ENCODE measurements at regions of chr22 and their contacts with region 1.

Region 1: GRCh38 chr22:17171313-17172171 is 12.5 kb upstream of the HDHD5 start:
- H3K4me3 ChIP-seq: peak overlapping the region; percentile 78
- H3K27ac ChIP-seq: peak overlapping the region; percentile 83
- H3K4me1 ChIP-seq: 0 out of 2 replicates have a peak, but pooled peaks cover 4% of the 10 kb centered on the region
- CTCF ChIP-seq: peak; percentile 90

Region 2: GRCh38 chr22:16970446-16970845 is 201.1 kb before region 1 on chr22:
- CTCF ChIA-PET with region 1: no interaction called
- POLR2A ChIA-PET with region 1: no interaction called
- H3K4me3 ChIP-seq: no peak overlapping the region
- H3K27ac ChIP-seq: no peak overlapping the region
- H3K4me1 ChIP-seq: no peaks in the 10 kb centered on the region
- CTCF ChIP-seq: no peak

Region 3: GRCh38 chr22:16989915-16990314 is 181.6 kb before region 1 on chr22:
- CTCF ChIA-PET with region 1: no interaction called
- POLR2A ChIA-PET with region 1: no interaction called
- H3K4me3 ChIP-seq: no peak overlapping the region
- H3K27ac ChIP-seq: no peak overlapping the region
- H3K4me1 ChIP-seq: no peaks in the 10 kb centered on the region
- CTCF ChIP-seq: no peak

Region 4: DNA sequence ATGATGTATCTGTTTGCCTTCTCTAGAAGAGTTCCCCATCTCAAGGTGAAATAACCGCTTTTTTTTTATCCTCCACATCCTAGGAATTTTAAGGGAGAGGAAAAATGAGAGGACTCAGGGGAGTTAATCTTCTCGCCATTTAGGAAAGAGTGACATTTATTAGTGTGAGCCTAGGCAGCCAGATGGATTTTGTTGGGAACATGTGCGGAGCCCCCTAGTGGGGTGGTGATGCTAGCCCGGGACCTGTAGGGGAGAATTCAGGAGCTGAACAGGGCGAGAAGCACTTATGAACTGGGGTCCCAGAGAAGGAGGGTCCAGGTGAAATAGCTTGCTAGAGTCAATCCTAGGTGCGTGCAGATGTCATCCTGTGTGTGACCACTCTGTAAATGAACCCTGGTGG is 76.0 kb before region 1 on chr22:
- CTCF ChIA-PET with region 1: interaction called, 13 read pairs
- POLR2A ChIA-PET with region 1: no interaction called
- H3K4me3 ChIP-seq: no peak overlapping the region
- H3K27ac ChIP-seq: no peak overlapping the region
- H3K4me1 ChIP-seq: no peaks in the 10 kb centered on the region
- CTCF ChIP-seq: no peak

Region 5: DNA sequence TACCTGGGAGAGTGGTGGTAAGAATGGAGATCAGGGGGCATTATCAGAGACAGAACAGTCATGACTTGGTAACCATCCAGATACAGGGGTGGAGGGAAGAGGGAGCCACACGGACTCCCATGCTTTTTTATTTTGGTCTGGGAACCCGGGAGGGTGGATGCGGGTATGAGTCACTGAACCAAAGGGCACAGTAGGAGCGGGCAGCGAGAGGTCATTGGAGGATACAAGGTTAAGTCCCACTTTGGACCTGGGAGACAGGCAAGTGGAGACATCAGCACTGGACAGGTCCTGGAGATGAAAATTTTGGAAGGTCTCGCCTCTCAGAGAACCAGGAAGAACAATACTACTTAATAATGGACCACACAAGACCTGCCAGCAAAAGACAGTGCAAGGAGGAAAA is 19.2 kb before region 1 on chr22:
- CTCF ChIA-PET with region 1: interaction called, 87 read pairs
- POLR2A ChIA-PET with region 1: interaction called, 35 read pairs
- H3K4me3 ChIP-seq: no peak overlapping the region
- H3K27ac ChIP-seq: no peak overlapping the region
- H3K4me1 ChIP-seq: peaks cover 7% of the 10 kb centered on the region
- CTCF ChIP-seq: no peak

Region 6: GRCh38 chr22:17201285-17201945 is 29.9 kb after region 1 on chr22:
- CTCF ChIA-PET with region 1: interaction called, 51 read pairs
- POLR2A ChIA-PET with region 1: interaction called, 4 read pairs
- H3K4me3 ChIP-seq: no peak overlapping the region
- H3K27ac ChIP-seq: no peak overlapping the region
- H3K4me1 ChIP-seq: no peaks in the 10 kb centered on the region
- CTCF ChIP-seq: no peak

Region 7: DNA sequence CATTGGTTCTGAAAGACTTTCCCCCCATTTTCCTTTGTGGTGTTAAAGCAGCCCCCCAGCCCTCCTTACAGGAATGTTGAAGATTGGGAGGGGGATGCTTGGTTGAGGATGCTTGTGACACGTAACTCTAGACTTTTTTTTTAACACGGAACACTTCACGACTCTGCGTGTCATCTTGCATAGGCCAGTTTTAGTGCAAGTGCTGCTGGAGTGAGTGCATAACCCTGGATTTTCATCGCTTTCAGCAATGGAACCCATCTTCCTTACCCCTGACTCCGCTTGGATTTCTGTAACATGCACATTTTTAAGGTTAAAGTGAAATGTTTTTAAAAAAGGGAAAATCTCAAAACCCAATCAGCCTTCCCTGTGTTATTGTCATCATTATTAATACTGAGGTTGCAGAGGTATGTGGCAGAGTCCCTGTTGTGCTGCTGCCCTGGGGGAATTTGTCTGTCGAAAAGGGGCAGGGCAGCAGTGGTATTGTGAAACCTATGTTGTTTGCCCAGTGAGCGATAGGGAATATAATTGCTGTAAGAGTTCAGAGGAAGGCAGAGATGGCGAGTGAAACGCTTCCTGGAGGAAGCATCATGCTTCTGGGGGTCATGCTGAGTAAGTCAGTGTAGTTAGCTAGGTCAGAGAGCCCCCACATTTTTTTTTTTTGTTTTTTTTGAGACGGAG is 209.8 kb after region 1 on chr22:
- CTCF ChIA-PET with region 1: interaction called, 15 read pairs
- POLR2A ChIA-PET with region 1: no interaction called
- H3K4me3 ChIP-seq: no peak overlapping the region
- H3K27ac ChIP-seq: no peak overlapping the region
- H3K4me1 ChIP-seq: peaks cover 23% of the 10 kb centered on the region
- CTCF ChIP-seq: no peak

Region 8: DNA sequence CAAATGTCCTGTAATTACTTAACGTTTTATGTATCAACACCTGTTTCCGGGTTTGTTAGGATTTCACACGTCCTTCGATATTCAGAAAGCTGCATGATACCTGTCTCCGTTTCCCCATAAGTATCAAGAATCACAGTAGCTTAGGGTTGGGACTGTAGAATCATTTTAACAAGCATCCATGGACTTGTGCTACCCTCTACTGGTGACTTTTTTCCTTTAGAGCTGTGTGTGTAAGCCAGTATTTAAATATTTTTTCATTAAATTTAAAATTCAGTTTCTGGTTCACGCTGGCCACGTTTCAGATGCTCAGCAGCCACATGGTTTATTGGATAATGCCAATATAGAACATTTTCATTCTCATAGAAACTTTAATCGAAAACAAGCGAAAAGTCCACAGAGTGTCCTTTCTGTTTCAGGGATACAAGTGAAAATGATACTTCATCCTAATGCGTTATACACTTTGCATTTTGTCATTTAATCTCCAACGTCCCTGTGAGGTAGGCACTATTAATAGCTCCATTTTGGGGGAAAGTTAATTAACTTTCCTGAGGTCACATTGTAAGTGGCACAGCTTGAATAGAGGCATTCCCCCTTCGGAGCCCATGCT is 330.2 kb after region 1 on chr22:
- CTCF ChIA-PET with region 1: interaction called, 92 read pairs
- POLR2A ChIA-PET with region 1: interaction called, 18 read pairs
- H3K4me3 ChIP-seq: no peak overlapping the region
- H3K27ac ChIP-seq: no peak overlapping the region
- H3K4me1 ChIP-seq: no peaks in the 10 kb centered on the region
- CTCF ChIP-seq: peak; percentile 34; the same call in 1 of the 2 replicates

Measured in HEK293 (cell line).